Sciatic nerve (tissue), 2 donors: ENCODE measurements at regions of chr18 and their contacts with region 1.

Region 1: GRCh38 chr18:45839414-45840395 is 14.2 kb downstream of the SIGLEC15 start:
- DNase-seq: no peak
- ATAC-seq: peak; percentile 46

Region 2: GRCh38 chr18:45664824-45665763 is 174.6 kb before region 1 on chr18:
- intact Hi-C with region 1: loop called (anchors 10 kb)
- DNase-seq: peak; percentile 72
- ATAC-seq: peak; percentile 78

Region 3: GRCh38 chr18:45896991-45897390 is 57.3 kb after region 1 on chr18:
- intact Hi-C with region 1: no loop called
- DNase-seq: no peak
- ATAC-seq: no peak